ENCODE measurements at regions of chr4 and their contacts with region 1.

Region 1: GRCh38 chr4:25312496-25313200 is at the start of gene ZCCHC4:
- DNase-seq: peak; percentile 90
- ATAC-seq: peak; percentile 97
- H3K4me3 Mint-ChIP-seq: peak within 1 kb of the TSS; percentile 99
- H3K27ac Mint-ChIP-seq: peak within 1 kb of the TSS; percentile 95
- H3K4me1 Mint-ChIP-seq: peaks cover 36% of the 10 kb centered on the region
- H3K27me3 Mint-ChIP-seq: peaks cover 3% of the 10 kb centered on the region
- total RNA-seq, gene ZCCHC4: 11.3 to 11.4 TPM

Region 2: GRCh38 chr4:25159884-25160713 is 152.5 kb before region 1 on chr4 and contains the start of gene SEPSECS:
- CTCF ChIA-PET with region 1: interaction called, 40 read pairs
- POLR2A ChIA-PET with region 1: interaction called, 13 read pairs
- DNase-seq: peak; percentile 97
- ATAC-seq: peak; percentile 89
- H3K4me3 Mint-ChIP-seq: peak within 1 kb of the TSS; percentile 89
- H3K27ac Mint-ChIP-seq: peak within 1 kb of the TSS; percentile 95
- H3K4me1 Mint-ChIP-seq: peaks cover 33% of the 10 kb centered on the region
- H3K27me3 Mint-ChIP-seq: no peaks in the 10 kb centered on the region
- total RNA-seq, gene SEPSECS: 10.8 to 12.5 TPM

Region 3: DNA sequence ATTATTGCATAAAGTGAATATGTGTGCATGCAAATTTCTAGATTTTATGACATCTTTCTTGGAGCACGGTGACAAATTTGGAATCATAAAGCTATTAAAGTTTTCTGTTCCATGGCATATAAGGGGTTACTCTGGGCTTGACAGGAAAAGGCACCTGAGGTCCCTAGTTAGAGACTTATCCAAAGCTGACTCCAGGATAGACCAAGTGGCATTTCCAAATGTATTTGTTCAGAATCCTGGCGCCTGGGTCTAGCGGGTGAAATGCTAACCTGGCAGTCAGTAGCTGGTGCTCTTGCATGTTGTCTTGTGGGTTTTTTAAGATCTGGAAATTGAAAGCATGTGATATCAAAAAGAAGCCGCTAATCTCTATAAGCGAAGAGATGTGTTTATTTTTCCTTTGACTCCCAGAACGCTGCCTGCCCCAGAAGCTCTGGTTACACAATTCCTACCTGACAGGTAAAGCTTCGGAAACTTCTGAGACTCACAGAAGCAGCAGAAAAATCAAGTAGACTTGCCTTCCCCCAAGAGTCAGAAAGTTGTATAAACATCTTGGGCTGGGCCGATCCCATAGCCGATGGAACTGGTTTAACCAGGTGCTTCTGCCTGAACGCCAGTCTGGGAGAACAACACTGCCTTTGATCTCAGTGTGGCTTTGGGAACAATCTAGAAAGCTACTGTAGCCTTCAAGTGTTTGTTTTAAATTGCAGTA is 13.0 kb before region 1 on chr4:
- CTCF ChIA-PET with region 1: interaction called, 24 read pairs
- POLR2A ChIA-PET with region 1: no interaction called
- DNase-seq: no peak
- ATAC-seq: no peak
- H3K4me3 Mint-ChIP-seq: no peak overlapping the region
- H3K27ac Mint-ChIP-seq: no peak overlapping the region
- H3K4me1 Mint-ChIP-seq: no peaks in the 10 kb centered on the region
- H3K27me3 Mint-ChIP-seq: peaks cover 16% of the 10 kb centered on the region

Region 4: DNA sequence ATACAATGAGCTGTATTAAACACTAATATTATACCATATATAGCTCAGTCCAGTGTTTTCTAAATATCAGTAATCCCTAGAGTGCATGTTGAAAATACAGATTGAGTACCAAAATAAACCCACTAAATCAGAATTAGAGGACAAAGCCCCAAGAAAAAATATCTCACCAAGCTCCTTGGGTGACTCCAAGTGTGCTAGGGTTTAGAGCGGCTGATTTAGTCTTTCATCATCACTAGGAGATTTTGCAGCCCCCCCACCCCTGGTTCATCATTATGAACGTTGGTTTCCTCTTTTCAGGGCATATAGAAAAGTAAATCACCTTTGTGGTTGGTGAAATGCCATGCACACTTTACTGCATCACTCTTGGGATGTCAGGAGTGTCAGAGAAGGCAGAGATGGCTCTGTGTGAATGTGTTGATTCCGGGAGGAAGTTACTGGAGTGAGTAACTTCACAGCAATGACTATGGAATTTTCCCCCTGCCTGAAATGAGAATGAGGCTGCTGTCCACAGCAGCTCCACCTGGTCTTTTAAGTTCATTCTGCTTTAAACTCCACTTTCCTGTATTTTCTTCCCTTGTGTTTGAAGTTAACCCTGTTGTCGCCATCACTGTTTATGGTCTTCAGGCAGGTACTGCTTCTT is 39.2 kb after region 1 on chr4:
- CTCF ChIA-PET with region 1: interaction called, 16 read pairs
- POLR2A ChIA-PET with region 1: no interaction called
- DNase-seq: no peak
- ATAC-seq: no peak
- H3K4me3 Mint-ChIP-seq: no peak overlapping the region
- H3K27ac Mint-ChIP-seq: no peak overlapping the region
- H3K4me1 Mint-ChIP-seq: no peaks in the 10 kb centered on the region
- H3K27me3 Mint-ChIP-seq: no peaks in the 10 kb centered on the region

Region 5: DNA sequence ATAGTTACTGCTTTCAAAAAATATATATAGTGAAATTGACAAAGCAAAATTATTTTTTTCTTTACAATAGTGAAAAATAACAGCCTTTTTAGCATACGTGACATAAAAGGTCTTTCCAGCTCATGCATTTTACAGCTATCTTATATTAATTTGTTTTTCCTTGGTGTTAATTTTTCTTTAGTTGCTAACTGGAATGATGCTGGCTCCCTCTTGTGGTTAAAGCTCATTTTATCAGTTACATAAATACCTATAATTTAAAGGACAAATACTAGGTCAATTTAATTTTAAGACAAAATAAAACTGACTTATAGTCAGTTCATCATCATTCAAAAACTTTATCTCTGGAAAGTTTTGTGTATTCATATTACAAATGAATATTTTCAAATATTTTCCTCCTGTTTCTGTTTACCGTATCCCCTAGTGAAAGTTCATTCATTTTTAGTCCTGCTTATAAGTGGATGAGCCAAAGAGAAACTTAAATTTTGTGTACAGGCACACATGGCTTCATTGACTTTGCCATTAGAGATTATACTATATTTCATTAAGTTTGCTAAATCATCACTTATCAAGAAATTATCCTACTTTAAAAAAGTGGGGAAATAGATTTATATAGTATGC is 54.5 kb after region 1 on chr4:
- CTCF ChIA-PET with region 1: interaction called, 61 read pairs
- POLR2A ChIA-PET with region 1: interaction called, 7 read pairs
- DNase-seq: no peak
- ATAC-seq: no peak
- H3K4me3 Mint-ChIP-seq: no peak overlapping the region
- H3K27ac Mint-ChIP-seq: no peak overlapping the region
- H3K4me1 Mint-ChIP-seq: no peaks in the 10 kb centered on the region
- H3K27me3 Mint-ChIP-seq: no peaks in the 10 kb centered on the region

Measured in activated CD8-positive, alpha-beta T cell treated with anti-CD3 and anti-CD28 coated beads, Interleukin-2, amount 10 ng/mL, durations not matched to agents 7 days and 5 days (primary cell).